Head of caudate nucleus (tissue), 42 donors: ENCODE measurements at regions of chr6 and their contacts with region 1.

Region 1: DNA sequence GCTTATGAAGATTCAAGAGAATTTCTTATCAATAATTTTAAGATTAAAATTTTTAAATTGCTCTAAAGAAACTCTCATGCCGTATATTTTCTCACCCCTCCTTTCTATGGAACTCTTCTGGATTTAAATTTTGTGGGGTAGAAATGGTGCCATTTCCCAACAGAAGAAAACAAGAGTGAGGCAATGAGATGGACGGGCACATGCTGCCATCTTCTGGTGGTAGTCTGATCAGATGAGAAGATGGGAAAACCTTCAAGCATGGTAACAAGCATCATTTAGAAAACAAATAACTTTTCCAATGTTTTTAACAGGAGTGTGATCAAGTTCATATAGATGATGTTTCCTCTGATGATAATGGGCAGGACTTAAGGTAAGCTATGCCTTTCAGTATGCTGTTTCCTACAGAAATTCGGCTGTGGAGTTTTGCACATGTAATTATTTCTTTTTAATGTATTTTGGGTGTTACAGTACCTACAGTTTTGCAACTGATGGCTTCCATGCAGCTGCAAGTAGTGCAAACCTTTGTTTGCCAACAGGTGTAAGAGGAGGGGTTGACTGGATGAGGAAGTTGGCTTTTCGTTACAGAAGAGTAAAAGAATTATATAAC is 271.4 kb downstream of the EYA4 start:
- DNase-seq: peak; percentile 11 to 83 (median 64)

Region 2: DNA sequence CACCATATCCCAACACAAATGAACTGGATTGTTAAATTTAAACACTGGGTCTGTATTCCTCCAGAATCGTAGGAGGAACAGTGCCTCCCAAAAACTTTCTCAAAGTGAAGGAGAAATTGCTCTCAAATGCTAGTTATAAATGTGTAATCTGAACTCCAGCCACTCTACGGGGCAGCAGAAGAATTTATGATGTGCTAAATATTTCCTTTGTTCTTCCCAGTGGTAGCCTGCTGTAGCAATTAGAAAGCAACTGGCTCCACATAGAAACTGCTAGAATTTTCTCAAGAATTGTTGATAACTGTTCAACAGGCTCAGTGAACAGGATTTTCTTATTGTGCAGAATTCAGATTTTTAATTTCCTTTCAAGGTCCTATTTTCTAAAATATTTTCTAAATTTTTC is 321.2 kb before region 1 on chr6:
- intact Hi-C with region 1: loop called (anchors 5 kb)
- DNase-seq: no peak

Region 3: DNA sequence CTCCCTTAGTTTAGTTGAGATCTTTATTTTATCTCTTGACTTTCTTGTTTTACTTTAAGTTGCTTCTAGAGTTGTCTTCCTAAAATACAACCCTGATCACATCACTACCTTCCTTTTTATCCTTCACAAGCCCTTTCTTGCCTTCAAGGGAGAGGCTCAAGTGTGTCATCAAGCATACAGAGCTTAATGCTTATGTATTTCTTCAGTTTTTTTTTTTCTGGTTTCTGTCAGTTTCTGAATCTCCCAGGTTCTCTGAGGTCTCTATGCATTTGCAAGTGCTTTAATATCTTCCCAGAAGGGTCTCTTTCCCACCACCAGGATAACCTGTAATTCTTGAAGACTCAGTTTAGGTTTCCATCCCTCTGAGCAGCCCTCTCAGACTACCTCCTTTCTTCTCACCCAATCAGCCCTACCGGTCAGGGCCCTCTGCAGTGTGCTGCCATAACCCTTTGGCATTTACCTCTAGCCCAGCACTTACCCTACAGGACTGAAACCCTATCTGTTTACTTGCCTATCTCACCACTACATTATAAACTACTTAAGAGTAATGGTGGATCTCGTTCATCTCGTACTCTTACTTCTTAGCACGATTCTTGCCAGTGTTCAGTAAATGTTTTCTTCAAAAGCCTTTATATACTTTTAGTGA is 234.5 kb before region 1 on chr6:
- intact Hi-C with region 1: no loop called
- DNase-seq: no peak